ENCODE measurements at regions of chr19 and their contacts with region 1.

Region 1: GRCh38 chr19:58338825-58339558 is 12.2 kb downstream of the ZSCAN22 start:
- DNase-seq: peak in 1 of 2 experiments; percentile 81
- H3K4me3 ChIP-seq: no peak overlapping the region
- H3K27ac ChIP-seq: no peak overlapping the region
- H3K4me1 ChIP-seq: no peaks in the 10 kb centered on the region
- H3K27me3 ChIP-seq: no peaks in the 10 kb centered on the region
- CTCF ChIP-seq: peak; percentile 54 to 76 (median 71)
- EP300 ChIP-seq: no peak
- POLR2A ChIP-seq: no peak
- RAD21 ChIP-seq: peak; percentile 39 to 52

Region 2: DNA sequence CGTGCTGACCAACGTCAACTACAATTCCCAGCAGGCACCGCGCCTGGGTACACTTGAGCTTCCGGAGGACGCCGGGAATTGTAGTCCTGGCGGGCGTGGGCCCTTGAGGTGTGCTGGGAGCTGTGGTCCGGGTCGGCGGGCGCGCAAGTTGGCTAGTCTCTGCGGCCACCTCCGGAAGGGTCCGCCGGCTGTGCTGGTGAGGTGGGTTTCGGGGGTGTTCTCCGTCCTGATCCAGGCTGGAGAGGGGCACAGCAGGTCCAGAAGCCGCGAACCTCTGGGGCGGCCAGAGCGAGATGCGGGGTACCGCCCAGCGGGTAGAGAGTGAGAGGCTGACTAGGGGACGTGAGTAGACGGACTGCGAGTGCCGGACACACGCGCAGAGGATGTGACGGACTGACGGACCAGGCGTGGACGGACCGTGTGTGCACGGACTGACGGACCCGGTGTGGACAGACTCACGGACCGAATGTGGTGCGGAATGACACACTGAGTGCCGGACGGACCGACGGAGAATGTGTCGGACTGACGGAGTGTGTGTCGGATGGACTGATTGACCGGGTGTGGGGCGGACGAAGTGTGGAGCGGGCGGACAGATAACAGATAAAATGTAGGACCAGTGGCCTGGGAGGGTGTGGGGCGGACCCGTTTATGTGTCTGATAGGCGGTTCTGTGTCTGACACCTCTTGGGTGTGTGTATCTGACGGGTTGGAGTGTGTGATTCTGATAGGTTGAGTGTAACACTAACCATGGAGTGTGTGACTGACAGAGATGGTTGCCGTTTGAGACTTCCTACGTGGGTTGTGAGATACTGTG is 11.9 kb before region 1 on chr19 and contains the start of gene ZSCAN22:
- CTCF ChIA-PET with region 1: interaction called, 30 read pairs
- POLR2A ChIA-PET with region 1: interaction called, 3 read pairs
- DNase-seq: peak; percentile 72 to 94
- H3K4me3 ChIP-seq: peak within 1 kb of the TSS; percentile 72 to 98 (median 88)
- H3K27ac ChIP-seq: peak within 1 kb of the TSS; percentile 65; the same call in 1 of the 2 replicates
- H3K4me1 ChIP-seq: no peaks in the 10 kb centered on the region
- H3K27me3 ChIP-seq: 0 out of 7 replicates have a peak, but pooled peaks cover 0 to 3% (median 0%) of the 10 kb centered on the region in 4 experiments
- CTCF ChIP-seq: no peak
- EP300 ChIP-seq: no peak
- POLR2A ChIP-seq: no peak; a peak in 1 of 3 replicates
- RAD21 ChIP-seq: no peak
- total RNA-seq, gene ZSCAN22: 3.1 and 3.2 TPM in 2 replicates

Region 3: DNA sequence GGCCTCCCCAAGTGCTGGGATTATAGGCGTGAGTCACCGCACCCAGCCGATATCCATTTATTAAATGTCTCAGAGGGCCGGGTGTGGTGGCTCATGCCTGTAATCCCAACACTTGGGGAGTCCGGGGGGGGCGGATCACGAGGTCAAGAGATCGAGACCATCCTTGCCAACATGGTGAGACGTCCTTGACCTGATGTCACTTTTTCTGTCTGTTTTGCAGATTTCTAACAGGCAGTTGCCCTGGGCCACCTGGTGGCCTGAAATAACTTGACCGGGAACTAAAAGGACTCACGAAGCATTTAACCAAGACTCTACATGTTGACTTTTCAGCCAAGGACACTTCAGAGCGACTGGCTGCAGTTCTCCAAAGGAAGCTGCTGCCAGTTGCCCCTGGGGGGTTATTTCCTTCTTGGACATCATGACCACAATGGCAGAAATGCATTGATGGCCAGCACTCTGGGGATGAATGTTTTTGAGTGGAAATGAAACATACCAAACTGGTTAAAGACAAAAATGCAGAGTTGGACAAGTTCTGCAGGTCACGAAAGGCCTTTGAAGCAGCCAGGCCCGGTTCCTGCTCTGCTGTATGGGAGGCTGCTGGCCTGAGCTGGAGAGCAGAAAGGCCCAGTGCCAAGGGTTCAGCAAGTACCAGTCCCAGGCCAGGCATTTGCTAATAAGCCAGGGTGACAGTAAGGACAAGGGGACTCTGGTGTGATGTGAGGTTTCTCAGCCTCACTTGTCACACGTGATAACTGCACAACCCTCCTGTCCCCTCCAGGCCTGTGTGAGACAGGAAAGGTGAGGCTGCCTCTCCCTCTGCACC is 33.5 kb after region 1 on chr19:
- CTCF ChIA-PET with region 1: interaction called, 10 read pairs
- POLR2A ChIA-PET with region 1: interaction called, 3 read pairs
- DNase-seq: no peak
- H3K4me3 ChIP-seq: no peak overlapping the region
- H3K27ac ChIP-seq: no peak overlapping the region
- H3K4me1 ChIP-seq: no peaks in the 10 kb centered on the region
- H3K27me3 ChIP-seq: no peaks in the 10 kb centered on the region
- CTCF ChIP-seq: peak in 2 of 3 experiments; percentile 43 to 55; a peak in 3 of 4 replicates
- EP300 ChIP-seq: no peak
- POLR2A ChIP-seq: no peak
- RAD21 ChIP-seq: peak; percentile 31 to 49; a peak in 3 of 4 replicates